Activated CD4-positive, alpha-beta memory T cell treated with anti-CD3 and anti-CD28 coated beads for 36 hours (primary cell): ENCODE measurements at regions of chr1 and their contacts with region 1.

Region 1: DNA sequence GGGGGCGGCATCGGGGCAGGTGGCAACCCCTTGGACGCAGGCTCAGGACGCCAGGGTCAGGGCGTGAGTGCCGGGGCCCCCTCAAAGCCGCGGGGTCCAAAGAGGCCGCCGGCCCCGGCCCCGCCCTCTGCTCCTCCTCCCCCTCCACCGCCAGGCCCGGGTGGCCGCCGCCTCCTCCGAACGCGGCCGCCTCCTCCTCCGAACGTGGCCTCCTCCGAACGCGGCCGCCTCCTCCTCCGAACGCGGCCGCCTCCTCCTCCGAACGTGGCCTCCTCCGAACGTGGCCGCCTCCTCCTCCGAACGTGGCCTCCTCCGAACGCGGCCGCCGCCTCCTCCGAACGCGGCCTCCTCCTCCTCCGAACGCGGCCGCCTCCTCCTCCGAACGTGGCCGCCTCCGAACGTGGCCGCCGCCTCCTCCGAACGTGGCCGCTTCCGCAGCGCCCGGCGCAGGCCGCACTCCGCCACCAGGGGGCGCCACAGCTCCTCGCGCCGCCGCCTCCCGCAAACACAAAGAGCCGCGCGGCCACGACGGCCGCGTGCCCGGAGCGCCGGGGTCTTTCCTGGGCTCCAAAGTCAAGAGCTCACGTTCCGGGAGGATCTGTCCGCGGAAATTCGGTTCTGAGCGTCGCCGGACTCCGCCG is 19.3 kb upstream of the SAMD11 start:
- DNase-seq: peak; percentile 89
- H3K4me3 Mint-ChIP-seq: peak overlapping the region; percentile 50
- H3K27ac Mint-ChIP-seq: no peak overlapping the region
- H3K4me1 Mint-ChIP-seq: peaks cover 7% of the 10 kb centered on the region
- H3K27me3 Mint-ChIP-seq: peaks cover 36% of the 10 kb centered on the region

Region 2: DNA sequence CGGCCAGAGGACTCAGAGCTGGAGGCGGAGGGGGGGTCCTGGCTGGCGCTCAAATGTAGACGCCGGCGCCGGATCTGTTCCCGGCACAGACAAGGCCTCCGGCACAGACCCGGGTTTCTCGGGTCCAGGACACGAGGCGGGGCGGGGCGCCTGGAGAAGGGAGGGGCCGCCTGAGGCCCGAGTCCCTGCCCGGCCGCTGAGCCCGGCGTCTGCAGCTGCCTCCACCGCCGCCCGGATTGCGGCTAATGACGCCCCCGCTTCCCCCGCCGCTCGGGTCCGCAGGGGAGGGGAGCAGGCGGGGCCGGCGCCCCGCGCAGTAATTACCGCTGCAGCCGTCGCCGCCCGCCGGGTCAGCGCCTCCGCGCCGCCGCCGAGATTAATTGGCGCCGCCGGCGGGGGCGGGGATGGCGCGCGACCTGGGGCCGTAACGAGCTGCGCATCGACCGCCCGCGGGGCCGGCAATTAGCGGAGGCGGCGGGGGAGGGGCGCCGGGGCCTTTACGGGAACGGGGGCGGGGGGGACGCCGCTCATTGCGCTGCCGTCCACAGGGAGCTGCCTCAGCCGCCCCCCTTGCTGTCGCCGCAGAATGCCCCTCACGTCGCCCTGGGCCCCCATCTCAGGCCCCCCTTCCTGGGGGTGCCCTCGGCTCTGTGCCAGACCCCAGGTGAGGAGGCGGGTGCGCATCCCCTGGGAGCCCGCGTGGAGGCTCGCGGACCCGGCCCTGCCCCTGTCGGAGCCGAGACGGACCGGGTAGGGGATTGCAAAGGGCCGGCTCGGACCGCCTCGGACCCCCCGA is 37.4 kb after region 1 on chr1:
- CTCF ChIA-PET with region 1: interaction called, 19 read pairs
- POLR2A ChIA-PET with region 1: no interaction called
- intact Hi-C with region 1: no loop called
- DNase-seq: no peak
- H3K4me3 Mint-ChIP-seq: peak overlapping the region; percentile 50
- H3K27ac Mint-ChIP-seq: no peak overlapping the region
- H3K4me1 Mint-ChIP-seq: peaks cover 8% of the 10 kb centered on the region
- H3K27me3 Mint-ChIP-seq: peaks cover 21% of the 10 kb centered on the region

Region 3: GRCh38 chr1:975896-976683 is 71.7 kb after region 1 on chr1:
- CTCF ChIA-PET with region 1: interaction called, 13 read pairs
- POLR2A ChIA-PET with region 1: no interaction called
- intact Hi-C with region 1: loop called (anchors 2 kb)
- DNase-seq: peak; percentile 82
- H3K4me3 Mint-ChIP-seq: no peak overlapping the region
- H3K27ac Mint-ChIP-seq: no peak overlapping the region
- H3K4me1 Mint-ChIP-seq: peaks cover 8% of the 10 kb centered on the region
- H3K27me3 Mint-ChIP-seq: peaks cover 12% of the 10 kb centered on the region